Activated CD8-positive, alpha-beta T cell treated with anti-CD3 and anti-CD28 coated beads for 36 hours (primary cell): ENCODE measurements at regions of chr19 and their contacts with region 1.

Region 1: GRCh38 chr19:2050991-2051772 is at the start of gene MKNK2:
- DNase-seq: peak; percentile 95
- ATAC-seq: peak; percentile 75
- H3K4me3 Mint-ChIP-seq: peak within 1 kb of the TSS; percentile 83
- H3K27ac Mint-ChIP-seq: peak within 1 kb of the TSS; percentile 96
- H3K4me1 Mint-ChIP-seq: peaks cover 52% of the 10 kb centered on the region
- H3K27me3 Mint-ChIP-seq: no peaks in the 10 kb centered on the region
- CTCF ChIP-seq: peak; percentile 49
- total RNA-seq, gene MKNK2: 323 to 327 TPM

Region 2: GRCh38 chr19:2061495-2062381 is 10.6 kb after region 1 on chr19:
- CTCF ChIA-PET with region 1: interaction called, 15 read pairs
- POLR2A ChIA-PET with region 1: interaction called, 29 read pairs
- intact Hi-C with region 1: no loop called
- DNase-seq: peak; percentile 100
- ATAC-seq: peak; percentile 94
- H3K4me3 Mint-ChIP-seq: peak overlapping the region; percentile 85
- H3K27ac Mint-ChIP-seq: peak overlapping the region; percentile 91
- H3K4me1 Mint-ChIP-seq: peaks cover 40% of the 10 kb centered on the region
- H3K27me3 Mint-ChIP-seq: no peaks in the 10 kb centered on the region
- CTCF ChIP-seq: no peak

Region 3: DNA sequence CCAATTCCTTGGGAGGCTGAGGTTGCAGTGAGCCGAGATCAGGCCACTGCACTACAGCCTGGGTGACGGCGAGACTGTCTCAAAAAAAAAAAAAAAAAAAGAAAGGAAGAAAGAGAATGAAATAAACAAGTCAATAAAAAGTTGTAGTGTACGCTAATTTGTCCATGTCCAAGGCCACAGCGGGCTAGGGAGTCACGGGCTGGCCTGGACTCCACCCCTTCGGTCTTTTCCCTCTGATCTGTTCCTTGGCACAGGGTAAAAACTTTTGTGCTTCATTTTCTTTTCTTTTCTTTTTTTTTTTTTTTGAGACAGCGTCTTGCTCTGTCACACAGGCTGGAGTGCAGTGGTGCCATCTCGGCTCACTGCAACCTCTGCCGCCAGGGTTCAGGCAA is 19.2 kb after region 1 on chr19:
- CTCF ChIA-PET with region 1: interaction called, 18 read pairs
- POLR2A ChIA-PET with region 1: interaction called, 9 read pairs
- intact Hi-C with region 1: no loop called
- DNase-seq: no peak
- ATAC-seq: no peak
- H3K4me3 Mint-ChIP-seq: no peak overlapping the region
- H3K27ac Mint-ChIP-seq: no peak overlapping the region
- H3K4me1 Mint-ChIP-seq: peaks cover 8% of the 10 kb centered on the region
- H3K27me3 Mint-ChIP-seq: no peaks in the 10 kb centered on the region
- CTCF ChIP-seq: no peak

Region 4: GRCh38 chr19:2096480-2097329 is 45.5 kb after region 1 on chr19 and contains the start of gene IZUMO4:
- CTCF ChIA-PET with region 1: interaction called, 11 read pairs
- POLR2A ChIA-PET with region 1: interaction called, 14 read pairs
- intact Hi-C with region 1: no loop called
- DNase-seq: peak; percentile 100
- ATAC-seq: peak; percentile 86
- H3K4me3 Mint-ChIP-seq: peak within 1 kb of the TSS; percentile 85
- H3K27ac Mint-ChIP-seq: peak within 1 kb of the TSS; percentile 84
- H3K4me1 Mint-ChIP-seq: peaks cover 26% of the 10 kb centered on the region
- H3K27me3 Mint-ChIP-seq: no peaks in the 10 kb centered on the region
- CTCF ChIP-seq: no peak
- total RNA-seq, gene IZUMO4: 22.6 to 23.0 TPM